A673 (cell line): ENCODE measurements at regions of chr1 and their contacts with region 1.

Region 1: DNA sequence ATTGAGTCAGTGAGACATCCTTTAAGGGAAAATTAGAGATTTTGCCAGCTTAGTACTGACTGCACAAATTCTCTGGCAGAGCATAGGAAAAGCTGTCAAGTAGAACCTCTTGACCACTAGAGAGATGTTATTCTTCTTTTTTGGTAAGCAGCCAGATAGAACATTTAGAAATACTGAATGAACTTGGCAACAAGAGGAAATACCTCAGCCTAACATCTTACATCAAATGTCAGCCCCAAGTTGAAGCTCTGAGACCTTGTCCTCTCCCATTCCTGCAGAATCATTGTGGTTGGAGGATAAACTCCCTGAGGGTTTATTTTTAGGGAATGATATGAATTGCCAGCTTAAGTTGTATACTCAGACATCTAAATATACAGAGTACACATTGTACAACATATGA is 53.5 kb downstream of the MIGA1 start:
- DNase-seq: peak; percentile 24
- H3K4me3 ChIP-seq: no peak overlapping the region
- H3K27ac ChIP-seq: no peak overlapping the region
- H3K4me1 ChIP-seq: peaks cover 30% of the 10 kb centered on the region
- H3K27me3 ChIP-seq: no peaks in the 10 kb centered on the region
- CTCF ChIP-seq: no peak

Region 2: GRCh38 chr1:77888081-77888780 is 55.3 kb after region 1 on chr1 and contains the start of gene NEXN:
- CTCF ChIA-PET with region 1: no interaction called
- POLR2A ChIA-PET with region 1: interaction called, 21 read pairs
- intact Hi-C with region 1: no loop called
- DNase-seq: peak; percentile 52
- H3K4me3 ChIP-seq: peak within 1 kb of the TSS; percentile 93
- H3K27ac ChIP-seq: peak within 1 kb of the TSS; percentile 54
- H3K4me1 ChIP-seq: peaks cover 13% of the 10 kb centered on the region
- H3K27me3 ChIP-seq: no peaks in the 10 kb centered on the region
- CTCF ChIP-seq: no peak
- total RNA-seq, gene NEXN: 0.45 and 0.70 TPM in 2 replicates